GM12878 (cell line): ENCODE measurements at regions of chr2 and their contacts with region 1.

Region 1: DNA sequence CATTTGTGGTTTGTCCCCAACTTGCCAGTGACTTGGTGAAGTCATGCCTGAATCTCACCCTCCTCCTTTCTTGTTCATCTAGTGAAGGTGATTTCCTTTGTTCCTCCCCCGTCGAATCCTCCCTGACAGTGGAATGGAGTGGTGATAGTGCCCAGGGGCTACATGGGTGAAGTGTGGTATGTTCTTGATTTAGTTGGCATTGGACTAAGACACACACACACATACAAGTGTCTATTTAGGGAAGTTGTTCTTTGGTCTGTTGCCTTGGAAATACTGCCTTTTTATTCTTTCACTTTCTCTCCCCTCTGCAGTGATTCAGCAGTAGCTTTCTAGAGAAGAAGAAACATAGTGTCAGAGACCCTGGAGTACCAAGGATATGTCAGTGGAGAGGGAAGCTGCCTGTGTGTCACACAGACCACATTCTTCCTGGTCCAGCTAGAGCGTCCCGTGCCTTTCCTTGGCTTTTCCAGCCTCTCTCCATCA is 10.9 kb downstream of the INPP4A start:
- DNase-seq: peak; percentile 68
- ATAC-seq: peak; percentile 53
- H3K4me3 ChIP-seq: peak overlapping the region; percentile 58; the same call in 1 of the 2 replicates
- H3K27ac ChIP-seq: peak overlapping the region; percentile 77
- H3K4me1 ChIP-seq: peaks cover 82% of the 10 kb centered on the region
- H3K27me3 ChIP-seq: no peaks in the 10 kb centered on the region
- CTCF ChIP-seq: no peak
- EP300 ChIP-seq: no peak
- POLR2A ChIP-seq: 0 out of 2 replicates have a peak, but pooled peaks have one; percentile 35
- RAD21 ChIP-seq: no peak

Region 2: DNA sequence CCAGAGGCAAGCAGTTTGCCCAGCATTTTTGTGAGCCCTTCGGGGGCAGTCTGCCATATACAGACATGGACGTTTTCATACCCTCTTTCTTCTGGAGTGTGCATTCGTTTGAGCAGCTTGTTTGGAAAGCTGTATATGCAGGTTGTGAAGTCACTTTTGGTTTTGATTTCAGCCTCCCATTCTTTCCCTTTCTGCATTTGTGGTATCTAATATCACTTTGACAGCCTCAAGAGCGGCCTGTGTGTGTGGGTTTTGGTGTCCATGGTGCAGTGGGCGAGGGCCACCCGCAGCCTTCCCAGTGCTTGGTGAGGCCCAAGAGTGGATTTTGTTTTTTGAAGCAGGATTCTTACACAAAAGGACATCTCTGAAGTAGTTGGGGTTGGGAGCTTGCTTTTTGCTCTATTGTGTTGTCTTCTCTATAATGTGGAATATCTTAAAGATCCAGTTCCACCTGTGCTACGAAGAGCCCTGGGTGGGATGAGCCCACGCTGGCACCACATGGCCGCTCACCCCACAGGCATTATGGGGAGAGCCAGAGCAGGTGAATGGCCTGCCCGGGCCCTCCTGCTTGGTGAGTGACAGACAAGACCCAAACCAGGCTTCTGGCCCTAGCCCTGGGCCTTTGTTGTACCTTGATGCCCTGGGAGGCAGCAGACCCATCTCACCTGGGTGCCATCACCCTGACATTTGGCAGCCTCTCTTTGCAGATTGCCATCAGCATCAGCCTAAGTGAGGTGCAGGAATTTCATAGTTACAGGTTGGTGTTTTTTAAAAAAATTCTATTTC is 18.7 kb after region 1 on chr2:
- CTCF ChIA-PET with region 1: interaction called, 12 read pairs
- POLR2A ChIA-PET with region 1: interaction called, 545 read pairs
- RAD21 ChIA-PET with region 1: interaction called, 199 read pairs
- SMC1A ChIA-PET with region 1: interaction called, 816 read pairs
- in situ Hi-C with region 1: no loop called
- intact Hi-C with region 1: no loop called
- DNase-seq: no peak
- ATAC-seq: peak; percentile 31
- H3K4me3 ChIP-seq: peak overlapping the region; percentile 34; the same call in 1 of the 2 replicates
- H3K27ac ChIP-seq: peak overlapping the region; percentile 88
- H3K4me1 ChIP-seq: peaks cover 96% of the 10 kb centered on the region
- H3K27me3 ChIP-seq: no peaks in the 10 kb centered on the region; a peak in 1 of 4 replicates
- CTCF ChIP-seq: no peak
- EP300 ChIP-seq: no peak
- POLR2A ChIP-seq: no peak
- RAD21 ChIP-seq: no peak

Region 3: DNA sequence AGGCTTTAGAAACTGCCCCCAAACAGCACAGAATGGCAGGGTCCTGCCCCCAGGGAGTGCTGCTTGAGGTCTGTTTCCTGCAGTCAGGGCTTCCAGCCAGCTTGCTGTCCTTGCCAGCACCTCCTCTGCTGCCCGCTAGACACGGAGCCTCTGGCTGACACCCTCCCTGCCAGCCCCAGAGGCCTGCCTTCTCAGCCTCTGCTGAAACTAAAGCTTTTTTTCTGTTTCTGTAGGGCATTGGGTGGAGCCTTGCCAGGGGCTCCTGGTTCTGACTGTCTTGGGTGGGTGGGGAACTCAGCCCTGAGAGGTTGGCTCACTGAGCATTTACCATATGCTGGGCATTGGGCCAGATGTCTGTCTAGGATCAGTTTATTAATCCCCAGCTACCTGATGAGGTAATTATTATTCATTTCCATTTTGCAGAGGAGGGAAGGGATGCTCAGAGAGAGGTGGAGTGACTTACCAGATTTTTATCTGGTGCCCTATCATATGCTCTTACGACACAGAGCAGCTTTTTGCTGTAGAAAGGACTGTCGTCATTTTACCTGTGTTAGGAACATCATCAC is 24.5 kb after region 1 on chr2:
- CTCF ChIA-PET with region 1: interaction called, 10 read pairs
- POLR2A ChIA-PET with region 1: interaction called, 545 read pairs
- RAD21 ChIA-PET with region 1: interaction called, 63 read pairs
- SMC1A ChIA-PET with region 1: interaction called, 816 read pairs
- in situ Hi-C with region 1: no loop called
- intact Hi-C with region 1: loop called (anchors 1 kb)
- DNase-seq: no peak
- ATAC-seq: peak; percentile 53
- H3K4me3 ChIP-seq: 0 out of 2 replicates have a peak overlapping the region, but pooled peaks have one; percentile 10
- H3K27ac ChIP-seq: peak overlapping the region; percentile 89
- H3K4me1 ChIP-seq: peaks cover 98% of the 10 kb centered on the region
- H3K27me3 ChIP-seq: no peaks in the 10 kb centered on the region
- CTCF ChIP-seq: no peak
- EP300 ChIP-seq: no peak
- POLR2A ChIP-seq: no peak; the same call in 1 of the 2 replicates
- RAD21 ChIP-seq: no peak